ENCODE measurements at regions of chr6 and their contacts with region 1.

Region 1: GRCh38 chr6:134002821-134003220 is 49.6 kb downstream of the SLC2A12 start:
- DNase-seq: no peak
- ATAC-seq: no peak
- H3K4me3 Mint-ChIP-seq: no peak overlapping the region
- H3K27ac Mint-ChIP-seq: no peak overlapping the region
- H3K4me1 Mint-ChIP-seq: no peaks in the 10 kb centered on the region
- H3K27me3 Mint-ChIP-seq: peaks cover 14% of the 10 kb centered on the region
- CTCF ChIP-seq: no peak

Region 2: DNA sequence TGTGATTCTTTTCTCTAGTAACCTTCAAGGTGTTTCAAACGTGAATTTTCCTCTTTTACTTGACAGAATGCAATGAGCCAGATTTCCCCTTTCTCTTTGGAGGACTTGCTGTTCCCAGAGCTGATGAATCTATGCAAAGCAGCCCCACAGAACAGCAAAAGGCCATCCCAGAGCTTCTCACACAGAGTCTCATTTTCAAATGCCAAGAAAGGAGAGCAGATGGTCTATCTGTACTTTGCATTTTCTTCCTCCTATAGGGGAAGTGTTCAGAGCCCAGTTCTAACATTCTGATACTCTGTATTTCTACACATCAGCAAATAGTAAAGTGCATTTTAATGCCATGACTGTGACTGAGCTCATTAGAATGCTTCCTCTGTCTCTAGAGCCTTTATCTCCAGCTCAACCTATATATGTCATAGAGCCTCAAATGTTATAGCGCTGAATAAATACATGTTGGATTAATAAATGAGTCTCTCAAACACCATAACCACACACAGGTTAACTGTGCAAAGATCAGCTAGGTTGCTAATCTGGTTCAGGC is 843.5 kb before region 1 on chr6:
- CTCF ChIA-PET with region 1: no interaction called
- POLR2A ChIA-PET with region 1: no interaction called
- intact Hi-C with region 1: no loop called
- DNase-seq: no peak
- ATAC-seq: no peak
- H3K4me3 Mint-ChIP-seq: no peak overlapping the region
- H3K27ac Mint-ChIP-seq: no peak overlapping the region
- H3K4me1 Mint-ChIP-seq: no peaks in the 10 kb centered on the region
- H3K27me3 Mint-ChIP-seq: no peaks in the 10 kb centered on the region
- CTCF ChIP-seq: no peak

Region 3: DNA sequence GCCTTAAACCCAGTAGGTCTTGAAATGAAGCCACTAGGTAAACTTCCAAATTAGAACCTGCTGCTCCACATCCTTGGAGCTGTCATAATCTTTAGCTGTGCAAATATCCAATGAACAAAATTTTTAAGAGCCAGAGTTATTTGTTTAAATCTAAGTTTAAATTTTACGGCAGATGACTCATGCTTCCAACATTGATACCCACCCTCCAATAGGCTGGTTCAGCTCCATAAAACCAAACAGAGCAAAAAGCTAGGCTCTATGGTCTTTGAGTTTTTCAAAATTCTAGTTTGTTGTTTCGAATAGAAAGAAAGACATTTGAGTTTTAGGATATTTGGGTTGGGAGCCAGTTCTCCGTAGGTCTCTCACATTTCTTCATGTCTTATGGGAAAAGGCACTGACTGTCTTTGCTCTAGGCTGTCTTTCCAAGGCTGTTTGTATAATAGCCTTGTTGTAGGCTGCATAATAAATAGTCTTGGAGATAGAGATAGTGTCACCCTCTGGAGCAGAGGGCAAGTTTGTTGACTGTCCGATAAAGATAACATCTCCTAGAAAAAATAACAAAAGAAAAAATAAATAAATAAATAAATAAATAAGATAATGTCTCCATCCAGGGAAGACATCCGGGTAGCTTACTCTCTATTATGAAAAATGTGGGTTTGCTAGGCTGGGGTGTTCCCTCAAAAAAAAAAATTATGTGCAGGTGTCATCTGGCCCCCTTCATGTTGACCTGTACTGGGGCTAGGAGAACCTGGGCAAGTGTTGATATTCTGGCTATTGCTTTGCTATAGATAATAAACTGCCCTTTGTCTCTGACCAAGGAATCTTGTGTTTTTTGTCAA is 13.1 kb after region 1 on chr6:
- CTCF ChIA-PET with region 1: no interaction called
- POLR2A ChIA-PET with region 1: no interaction called
- intact Hi-C with region 1: loop called (anchors 2 kb)
- DNase-seq: no peak
- ATAC-seq: no peak
- H3K4me3 Mint-ChIP-seq: no peak overlapping the region
- H3K27ac Mint-ChIP-seq: no peak overlapping the region
- H3K4me1 Mint-ChIP-seq: no peaks in the 10 kb centered on the region
- H3K27me3 Mint-ChIP-seq: peaks cover 7% of the 10 kb centered on the region
- CTCF ChIP-seq: no peak

Region 4: DNA sequence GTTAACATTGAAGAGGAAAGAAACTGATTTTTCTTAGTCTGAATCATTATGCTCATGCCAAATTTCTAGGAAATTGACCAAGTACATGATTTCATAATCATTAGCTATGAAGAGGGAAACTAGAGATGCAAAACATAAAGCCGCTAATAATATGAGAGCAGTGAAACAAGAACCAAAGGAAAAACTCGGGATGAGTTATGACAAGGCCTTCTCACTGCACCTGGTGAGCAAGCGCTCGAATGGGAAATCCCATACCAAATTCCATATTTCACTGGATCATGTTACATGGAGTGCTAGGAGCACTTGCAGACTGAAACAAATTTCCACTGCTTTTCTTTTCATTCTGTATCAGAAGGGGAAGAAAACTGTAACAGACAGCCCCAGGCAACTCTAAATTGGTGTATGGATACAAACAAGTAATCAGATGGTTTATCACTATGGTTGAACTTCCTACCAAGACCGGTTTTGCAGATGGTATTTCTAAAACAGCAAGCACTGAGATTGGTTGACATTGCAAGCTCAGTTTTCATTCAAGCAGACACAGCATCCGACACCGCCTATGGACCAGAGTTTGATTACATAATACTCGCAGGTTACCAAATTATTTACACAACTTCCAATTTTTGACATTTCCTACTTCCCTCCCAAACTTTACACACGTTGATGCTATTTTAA is 737.0 kb after region 1 on chr6:
- CTCF ChIA-PET with region 1: no interaction called
- POLR2A ChIA-PET with region 1: no interaction called
- intact Hi-C with region 1: no loop called
- DNase-seq: no peak
- ATAC-seq: no peak
- H3K4me3 Mint-ChIP-seq: no peak overlapping the region
- H3K27ac Mint-ChIP-seq: no peak overlapping the region
- H3K4me1 Mint-ChIP-seq: no peaks in the 10 kb centered on the region
- H3K27me3 Mint-ChIP-seq: peaks cover 4% of the 10 kb centered on the region
- CTCF ChIP-seq: no peak